Head of caudate nucleus (tissue), 42 donors: ENCODE measurements at regions of chr9 and their contacts with region 1.

Region 1: GRCh38 chr9:76458903-76459690 is at the start of gene GCNT1:
- DNase-seq: peak; percentile 12 to 88 (median 76)

Region 2: GRCh38 chr9:76311586-76311985 is 147.5 kb before region 1 on chr9:
- intact Hi-C with region 1: no loop called
- DNase-seq: no peak

Region 3: DNA sequence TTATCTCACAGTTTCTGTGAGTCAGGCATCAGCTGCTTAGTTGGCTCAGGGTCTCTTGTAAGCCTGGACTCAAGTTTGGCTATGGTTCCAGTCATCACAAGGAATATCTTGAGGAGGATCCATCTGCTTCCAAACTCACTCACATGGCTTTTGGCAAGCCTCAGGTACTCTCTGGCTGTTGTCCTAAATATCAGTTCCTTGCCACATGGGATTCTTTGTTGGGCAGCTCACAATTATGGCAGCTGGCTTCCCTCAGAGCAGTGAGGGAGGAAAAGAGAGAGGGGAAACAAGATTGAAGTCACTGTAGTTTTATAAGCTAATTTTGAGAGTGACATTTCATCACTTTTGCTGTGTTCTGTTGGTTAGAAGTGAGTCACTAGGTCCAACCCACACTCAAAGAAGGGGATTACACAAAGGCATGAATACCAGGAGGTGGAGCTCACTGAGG is 144.4 kb after region 1 on chr9:
- intact Hi-C with region 1: no loop called
- DNase-seq: no peak

Region 4: GRCh38 chr9:76662476-76663281 is 203.6 kb after region 1 on chr9:
- intact Hi-C with region 1: loop called (anchors 10 kb)
- DNase-seq: no peak